Activated naive CD4-positive, alpha-beta T cell treated with anti-CD3 and anti-CD28 coated beads for 36 hours (primary cell): ENCODE measurements at regions of chr12 and their contacts with region 1.

Region 1: DNA sequence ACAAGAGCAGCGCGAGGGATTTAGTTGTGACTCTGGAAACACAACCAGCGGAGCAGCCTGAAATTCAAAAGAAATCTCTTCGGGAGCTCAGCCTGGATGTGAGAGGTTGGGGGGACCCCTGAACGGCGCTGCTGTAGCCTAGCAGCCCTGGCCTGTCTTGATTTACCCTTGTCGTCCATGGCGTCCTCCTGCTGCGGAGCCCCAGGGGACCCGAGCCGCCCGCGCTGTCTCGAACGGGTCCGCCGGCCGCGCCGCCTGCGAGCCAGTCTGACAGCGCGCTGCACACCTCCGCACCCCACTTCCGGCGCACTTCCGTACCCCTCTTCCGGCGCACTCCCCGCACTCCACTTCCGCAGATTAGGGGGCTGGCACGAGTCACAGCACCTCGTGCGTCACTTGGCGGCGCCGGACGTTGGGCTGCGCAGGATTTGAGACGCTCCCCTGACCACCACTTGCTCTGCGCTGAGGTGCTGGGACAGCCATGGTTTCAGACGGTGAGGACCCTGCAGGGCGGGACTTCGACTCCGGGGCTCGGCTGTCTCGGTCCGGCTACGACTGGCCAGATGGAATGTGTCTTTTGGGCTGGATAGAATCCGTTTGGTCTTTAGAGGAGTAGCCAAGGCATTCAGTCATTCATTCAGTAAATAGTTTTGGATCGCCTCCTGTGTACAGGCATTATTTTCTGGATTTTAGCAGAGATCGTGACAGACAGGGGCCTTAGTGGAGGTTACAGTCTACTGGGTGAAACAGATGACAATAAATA is at the starts of genes EIF2B1 and GTF2H3:
- DNase-seq: peak; percentile 99
- H3K4me3 Mint-ChIP-seq: peak within 1 kb of the TSS; percentile 99
- H3K27ac Mint-ChIP-seq: peak within 1 kb of the TSS; percentile 94
- H3K4me1 Mint-ChIP-seq: peaks cover 33% of the 10 kb centered on the region
- H3K27me3 Mint-ChIP-seq: no peaks in the 10 kb centered on the region
- total RNA-seq, gene EIF2B1: 54.3 to 60.9 TPM
- total RNA-seq, gene GTF2H3: 56.6 to 57.7 TPM

Region 2: GRCh38 chr12:123601602-123602489 is 31.7 kb before region 1 on chr12 and contains the start of gene DDX55:
- CTCF ChIA-PET with region 1: interaction called, 3 read pairs
- intact Hi-C with region 1: loop called (anchors 1 kb)
- DNase-seq: peak; percentile 87
- H3K4me3 Mint-ChIP-seq: peak within 1 kb of the TSS; percentile 89
- H3K27ac Mint-ChIP-seq: peak within 1 kb of the TSS; percentile 94
- H3K4me1 Mint-ChIP-seq: peaks cover 45% of the 10 kb centered on the region
- H3K27me3 Mint-ChIP-seq: no peaks in the 10 kb centered on the region
- total RNA-seq, gene DDX55: 44.8 to 48.7 TPM

Region 3: DNA sequence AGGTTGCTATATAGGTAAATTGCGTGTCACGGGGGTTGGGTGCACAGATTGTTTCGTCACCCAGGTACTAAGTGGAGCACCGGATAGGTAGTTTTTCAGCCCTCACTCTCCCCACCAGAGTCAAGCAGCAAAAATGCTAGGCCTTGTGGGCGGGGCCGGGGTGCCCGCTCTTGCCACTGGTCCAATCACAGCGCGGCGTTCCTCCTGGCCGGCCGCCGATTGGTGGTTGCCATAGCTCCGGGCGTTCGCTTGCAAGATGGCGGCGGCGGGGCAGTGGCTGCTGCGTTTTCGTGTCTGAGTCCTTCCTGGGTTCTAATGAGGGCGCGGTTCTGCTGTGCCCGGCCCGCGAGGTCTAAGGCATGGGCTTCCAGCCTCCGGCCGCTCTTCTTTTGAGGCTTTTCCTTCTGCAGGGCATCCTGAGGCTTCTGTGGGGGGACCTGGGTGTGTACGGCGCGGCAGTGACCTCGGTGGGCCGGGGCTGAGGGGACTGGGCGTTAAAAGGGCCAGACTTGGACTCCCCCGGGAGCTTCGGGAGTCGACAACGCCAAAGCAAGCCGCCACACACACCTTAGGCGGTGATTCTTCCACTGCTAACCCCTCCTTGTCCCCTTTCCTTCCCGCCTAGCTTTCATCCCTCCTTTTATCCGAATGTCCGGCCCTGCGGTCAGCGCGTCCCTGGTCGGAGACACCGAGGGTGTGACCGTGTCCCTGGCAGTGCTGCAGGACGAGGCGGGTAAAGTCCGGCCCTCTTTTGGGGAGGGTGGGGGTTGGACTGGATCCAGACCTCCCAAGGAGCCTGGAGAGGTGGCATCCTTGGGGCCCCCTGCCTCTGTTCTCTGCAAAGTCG is 37.5 kb after region 1 on chr12 and contains the start of gene TCTN2:
- CTCF ChIA-PET with region 1: no interaction called
- intact Hi-C with region 1: loop called (anchors 2 kb)
- DNase-seq: peak; percentile 95
- H3K4me3 Mint-ChIP-seq: peak within 1 kb of the TSS; percentile 81
- H3K27ac Mint-ChIP-seq: no peak within 1 kb of the TSS
- H3K4me1 Mint-ChIP-seq: peaks cover 17% of the 10 kb centered on the region
- H3K27me3 Mint-ChIP-seq: no peaks in the 10 kb centered on the region
- total RNA-seq, gene TCTN2: 3.0 to 3.5 TPM

Region 4: GRCh38 chr12:123761841-123762714 is 128.5 kb after region 1 on chr12 and contains the start of gene DNAH10:
- CTCF ChIA-PET with region 1: interaction called, 4 read pairs
- intact Hi-C with region 1: loop called (anchors 10 kb)
- DNase-seq: peak; percentile 34
- H3K4me3 Mint-ChIP-seq: peak within 1 kb of the TSS; percentile 73
- H3K27ac Mint-ChIP-seq: no peak within 1 kb of the TSS
- H3K4me1 Mint-ChIP-seq: no peaks in the 10 kb centered on the region
- H3K27me3 Mint-ChIP-seq: peaks cover 2% of the 10 kb centered on the region
- total RNA-seq, gene DNAH10: 0.05 TPM

Region 5: GRCh38 chr12:123972457-123973401 is 339.2 kb after region 1 on chr12 and contains the starts of genes CCDC92 and ZNF664:
- CTCF ChIA-PET with region 1: no interaction called
- intact Hi-C with region 1: loop called (anchors 5 kb)
- DNase-seq: peak; percentile 94
- H3K4me3 Mint-ChIP-seq: peak within 1 kb of the TSS; percentile 88
- H3K27ac Mint-ChIP-seq: peak within 1 kb of the TSS; percentile 61
- H3K4me1 Mint-ChIP-seq: peaks cover 33% of the 10 kb centered on the region
- H3K27me3 Mint-ChIP-seq: no peaks in the 10 kb centered on the region
- total RNA-seq, gene CCDC92: 3.3 to 3.7 TPM
- total RNA-seq, gene ZNF664: 42.2 to 46.0 TPM